ENCODE measurements at regions of chr16 and their contacts with region 1.

Region 1: DNA sequence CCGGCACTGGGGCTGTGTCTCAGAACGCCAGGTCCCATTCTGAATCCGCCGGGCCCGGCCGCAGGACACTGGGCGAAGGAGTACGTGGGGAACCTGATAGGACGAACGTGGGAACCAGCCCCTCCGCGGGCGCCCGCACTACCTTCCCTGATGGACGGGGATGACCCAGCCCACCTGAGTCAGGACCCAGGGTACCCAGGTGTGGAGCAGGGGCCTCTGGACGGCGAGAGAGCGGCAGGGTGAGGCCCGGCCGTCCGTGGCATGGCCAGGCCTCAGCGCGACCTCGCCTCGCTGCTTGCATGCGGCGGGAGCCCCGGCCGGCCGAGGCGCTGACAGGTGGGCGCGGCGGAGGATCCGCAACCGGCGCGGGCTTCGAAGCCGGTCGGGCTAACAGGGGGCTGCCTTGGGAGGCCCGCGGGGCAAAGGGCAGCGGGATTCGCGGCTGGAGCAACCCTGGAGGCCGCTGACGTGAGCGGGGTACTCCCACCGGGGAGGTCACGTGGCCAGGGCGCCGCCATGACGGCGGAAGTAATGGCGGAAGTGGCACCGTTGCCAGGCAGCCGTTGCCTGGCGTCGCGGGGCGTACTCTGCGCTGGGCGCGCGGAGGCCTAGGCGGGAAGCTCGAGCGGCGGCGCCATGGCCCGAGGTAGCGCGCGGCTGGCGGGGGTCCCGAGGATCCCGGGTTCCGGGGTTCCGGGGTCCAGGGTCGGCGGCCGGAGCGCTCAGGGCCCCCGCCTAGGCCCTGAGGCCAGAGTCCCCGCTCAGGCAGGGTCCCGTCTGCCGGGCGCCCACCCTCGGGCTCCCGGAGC is at the start of gene WDR90:
- DNase-seq: peak; percentile 99
- H3K4me3 ChIP-seq: peak within 1 kb of the TSS; percentile 70 to 76
- H3K27ac ChIP-seq: peak within 1 kb of the TSS; percentile 77 to 80
- H3K4me1 ChIP-seq: peaks cover 4 to 29% of the 10 kb centered on the region in 2 experiments; a peak in 2 of 4 replicates
- H3K27me3 ChIP-seq: no peaks in the 10 kb centered on the region
- CTCF ChIP-seq: no peak
- EP300 ChIP-seq: no peak
- RAD21 ChIP-seq: no peak
- polyA plus RNA-seq, gene WDR90: 30.5 and 32.0 TPM in 2 replicates

Region 2: GRCh38 chr16:626787-627186 is 22.2 kb before region 1 on chr16:
- CTCF ChIA-PET with region 1: interaction called, 12 read pairs
- POLR2A ChIA-PET with region 1: no interaction called
- DNase-seq: no peak
- H3K4me3 ChIP-seq: no peak overlapping the region
- H3K27ac ChIP-seq: peak overlapping the region in 1 of 2 experiments; percentile 91; a peak in 2 of 4 replicates
- H3K4me1 ChIP-seq: peaks cover 10 to 39% of the 10 kb centered on the region in 2 experiments; a peak in 3 of 4 replicates
- H3K27me3 ChIP-seq: no peaks in the 10 kb centered on the region
- CTCF ChIP-seq: no peak
- EP300 ChIP-seq: no peak
- RAD21 ChIP-seq: no peak

Region 3: DNA sequence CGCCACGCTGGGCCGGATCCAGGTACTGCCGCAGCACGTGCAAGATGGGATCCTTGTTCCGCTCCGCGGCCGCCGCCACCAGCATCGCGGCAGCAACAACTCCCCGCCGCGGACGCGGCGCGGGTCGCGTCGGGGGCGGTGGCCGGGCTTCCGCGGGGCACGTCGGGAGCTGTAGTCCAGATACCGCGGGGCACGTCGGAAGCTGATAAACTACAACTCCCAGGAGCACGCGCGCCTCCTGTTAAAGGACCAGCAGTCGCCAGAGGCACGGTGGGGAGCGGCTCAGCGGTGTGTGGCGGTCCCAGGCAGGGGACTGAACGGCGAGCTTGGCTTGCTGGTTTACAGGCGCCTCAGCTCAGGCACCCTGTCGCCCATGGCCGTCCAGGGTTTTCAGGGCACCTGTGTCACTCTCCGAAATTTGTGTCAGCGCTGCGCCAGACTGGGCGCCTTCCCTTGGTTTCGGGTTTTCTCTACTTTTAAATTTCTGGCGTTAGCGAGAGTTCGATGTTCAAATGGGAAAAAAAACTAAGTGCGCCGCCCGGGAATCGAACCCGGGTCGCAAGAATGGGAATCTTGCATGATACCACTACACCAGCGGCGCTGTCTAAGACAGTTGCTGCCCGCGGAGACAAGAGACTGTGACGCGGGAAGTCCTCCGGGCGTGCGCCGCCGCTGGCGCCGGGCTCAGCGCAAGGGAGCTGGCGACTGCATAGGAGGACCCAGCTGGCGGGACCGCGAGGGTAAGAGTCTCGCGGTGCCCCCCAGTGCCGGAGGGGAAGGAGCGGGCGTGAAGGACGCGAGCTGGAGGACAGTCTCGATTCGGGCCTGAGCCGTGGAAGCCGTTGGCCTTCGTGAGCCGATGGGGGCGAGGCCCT is 12.5 kb before region 1 on chr16 and contains the start of gene METTL26:
- CTCF ChIA-PET with region 1: interaction called, 11 read pairs
- POLR2A ChIA-PET with region 1: interaction called, 4 read pairs
- DNase-seq: peak; percentile 94
- H3K4me3 ChIP-seq: peak within 1 kb of the TSS; percentile 78 to 87
- H3K27ac ChIP-seq: peak within 1 kb of the TSS; percentile 94 to 98
- H3K4me1 ChIP-seq: peaks cover 0 to 33% of the 10 kb centered on the region in 2 experiments; a peak in 1 of 4 replicates
- H3K27me3 ChIP-seq: no peaks in the 10 kb centered on the region
- CTCF ChIP-seq: no peak
- EP300 ChIP-seq: 0 out of 4 replicates have a peak, but pooled peaks of 1 of the 2 experiments have one; percentile 1
- RAD21 ChIP-seq: no peak
- polyA plus RNA-seq, gene METTL26: 158 and 167 TPM in 2 replicates

Region 4: DNA sequence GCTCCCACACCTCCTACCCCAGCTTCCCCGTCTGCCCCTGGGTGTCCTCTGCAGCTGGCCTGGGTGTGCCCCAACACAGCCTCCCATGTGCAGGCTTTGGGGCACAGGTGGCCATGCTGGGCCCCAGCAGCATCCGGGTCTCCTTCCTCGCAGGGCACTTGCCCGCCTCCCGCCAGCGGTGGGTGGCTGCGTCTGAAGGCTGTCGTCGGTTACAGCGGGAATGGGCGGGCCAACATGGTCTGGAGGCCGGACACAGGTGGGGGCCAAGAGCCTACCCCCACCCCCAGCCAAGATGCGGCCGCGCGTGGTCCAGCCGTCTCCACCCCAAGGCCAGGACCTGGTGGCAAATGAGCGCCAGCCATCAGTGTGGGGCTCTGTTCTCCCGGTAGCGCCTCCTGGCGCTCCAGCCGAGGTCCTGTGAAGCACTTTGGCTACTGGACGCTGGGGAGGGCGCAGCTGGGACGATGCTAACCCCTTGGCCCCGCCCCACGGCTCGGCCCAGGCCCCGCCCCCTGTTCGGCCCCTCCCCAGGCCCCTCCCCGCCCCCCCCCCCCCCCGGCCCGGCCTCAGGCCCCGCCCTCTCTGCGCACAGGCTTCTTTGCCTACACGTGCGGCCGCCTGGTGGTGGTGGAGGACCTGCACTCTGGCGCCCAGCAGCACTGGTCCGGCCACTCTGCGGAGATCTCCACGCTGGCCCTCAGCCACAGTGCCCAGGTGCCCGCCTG is 11.6 kb after region 1 on chr16:
- CTCF ChIA-PET with region 1: interaction called, 92 read pairs
- POLR2A ChIA-PET with region 1: interaction called, 13 read pairs
- DNase-seq: peak; percentile 98
- H3K4me3 ChIP-seq: peak overlapping the region in 1 of 2 experiments; percentile 40; a peak in 2 of 4 replicates
- H3K27ac ChIP-seq: peak overlapping the region; percentile 45 to 96
- H3K4me1 ChIP-seq: peaks cover 3 to 35% of the 10 kb centered on the region in 2 experiments; a peak in 3 of 4 replicates
- H3K27me3 ChIP-seq: no peaks in the 10 kb centered on the region
- CTCF ChIP-seq: peak; percentile 55
- EP300 ChIP-seq: no peak; a peak in 1 of 4 replicates
- RAD21 ChIP-seq: peak; percentile 14; the same call in 1 of the 2 replicates

Region 5: GRCh38 chr16:667780-668518 is 19.0 kb after region 1 on chr16 and contains the start of gene RHOT2:
- CTCF ChIA-PET with region 1: interaction called, 69 read pairs
- POLR2A ChIA-PET with region 1: no interaction called
- DNase-seq: peak; percentile 96
- H3K4me3 ChIP-seq: peak within 1 kb of the TSS; percentile 88 to 93
- H3K27ac ChIP-seq: peak within 1 kb of the TSS; percentile 56 to 81
- H3K4me1 ChIP-seq: peaks cover 0 to 15% of the 10 kb centered on the region in 2 experiments; a peak in 1 of 4 replicates
- H3K27me3 ChIP-seq: no peaks in the 10 kb centered on the region
- CTCF ChIP-seq: peak; percentile 82
- EP300 ChIP-seq: peak; percentile 25 to 30; a peak in 1 of 4 replicates
- RAD21 ChIP-seq: peak; percentile 44; the same call in 1 of the 2 replicates
- polyA plus RNA-seq, gene RHOT2: 229 and 255 TPM in 2 replicates

Measured in SK-N-SH (cell line).